Adrenal gland (tissue), 19 donors: ENCODE measurements at regions of chr19 and their contacts with region 1.

Region 1: DNA sequence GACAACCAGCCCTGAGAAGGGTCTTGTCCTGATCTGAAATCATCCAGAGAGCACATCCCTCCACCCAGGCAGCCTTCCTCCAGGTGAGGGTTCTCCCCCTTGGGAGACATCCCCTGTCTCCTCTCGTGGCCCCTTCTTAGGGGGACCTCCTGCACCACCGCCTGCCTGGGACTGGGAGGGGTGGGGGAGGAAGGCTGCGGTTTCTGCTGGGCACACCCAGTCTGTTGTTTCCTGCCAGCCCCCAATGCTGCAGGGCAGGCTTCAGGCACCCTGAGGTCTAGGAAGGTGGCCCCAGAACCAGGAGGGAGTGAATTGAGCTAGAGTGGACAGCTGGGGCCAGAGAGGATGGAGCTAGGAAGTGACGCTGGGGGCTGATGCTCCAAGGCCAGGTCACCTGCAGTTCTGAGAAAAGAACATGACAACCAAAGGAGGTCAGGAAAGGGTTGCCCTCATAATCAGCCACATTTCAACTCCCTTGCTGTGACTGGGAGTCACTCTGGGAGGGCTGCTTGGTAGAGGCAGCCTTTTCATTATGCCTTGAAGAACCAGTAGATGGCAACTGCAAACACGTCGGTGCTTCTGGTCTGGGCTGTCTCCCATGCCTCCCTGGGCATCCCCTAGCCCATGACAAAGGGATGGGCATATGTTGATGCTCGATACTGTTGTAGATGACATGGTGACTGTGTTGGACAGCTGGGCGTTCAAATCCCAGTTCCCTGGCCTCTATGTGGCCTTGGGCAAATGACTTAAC is 1.4 kb downstream of the ARHGEF18 start:
- DNase-seq: peak in 1 of 7 donors; percentile 10
- H3K4me3 ChIP-seq: no peak overlapping the region
- H3K27ac ChIP-seq: no peak overlapping the region
- H3K4me1 ChIP-seq: peaks cover 0 to 2% of the 10 kb centered on the region in 2 donors
- H3K27me3 ChIP-seq: no peaks in the 10 kb centered on the region
- CTCF ChIP-seq: no peak
- POLR2A ChIP-seq: no peak

Region 2: GRCh38 chr19:7312816-7313215 is 37.3 kb before region 1 on chr19:
- intact Hi-C with region 1: no loop called
- DNase-seq: peak in 2 of 7 donors; percentile 28 to 53
- H3K4me3 ChIP-seq: no peak overlapping the region
- H3K27ac ChIP-seq: no peak overlapping the region
- H3K4me1 ChIP-seq: no peaks in the 10 kb centered on the region
- H3K27me3 ChIP-seq: no peaks in the 10 kb centered on the region
- CTCF ChIP-seq: no peak
- POLR2A ChIP-seq: no peak

Region 3: GRCh38 chr19:7415163-7415858 is 65.2 kb after region 1 on chr19:
- intact Hi-C with region 1: no loop called
- DNase-seq: no peak
- H3K4me3 ChIP-seq: no peak overlapping the region
- H3K27ac ChIP-seq: no peak overlapping the region
- H3K4me1 ChIP-seq: no peaks in the 10 kb centered on the region
- H3K27me3 ChIP-seq: no peaks in the 10 kb centered on the region
- CTCF ChIP-seq: no peak
- POLR2A ChIP-seq: no peak

Region 4: DNA sequence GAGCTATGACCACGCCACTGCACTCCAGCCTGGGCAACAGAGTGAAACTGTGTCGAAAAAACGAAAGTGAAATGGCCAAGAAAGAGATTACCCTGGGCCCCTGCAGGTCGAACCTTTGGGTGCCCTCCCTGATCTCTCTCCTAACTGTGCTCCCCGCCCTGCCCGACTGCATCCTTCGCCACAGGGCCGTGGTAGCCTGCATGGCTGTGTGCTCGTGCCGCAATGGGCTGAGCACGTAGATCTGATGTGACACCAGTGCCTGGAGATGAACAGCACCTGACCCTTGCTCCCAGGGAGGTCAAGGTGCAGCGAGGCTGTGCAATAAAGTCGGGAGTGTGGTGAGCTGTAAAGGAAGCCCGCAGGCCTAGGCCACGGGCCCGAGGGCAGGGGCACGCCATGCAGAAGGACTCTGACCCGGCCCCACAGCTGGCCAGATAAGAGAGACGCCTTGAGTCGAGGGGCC is 78.5 kb after region 1 on chr19:
- intact Hi-C with region 1: no loop called
- DNase-seq: no peak
- H3K4me3 ChIP-seq: no peak overlapping the region
- H3K27ac ChIP-seq: no peak overlapping the region
- H3K4me1 ChIP-seq: no peaks in the 10 kb centered on the region
- H3K27me3 ChIP-seq: no peaks in the 10 kb centered on the region
- CTCF ChIP-seq: no peak
- POLR2A ChIP-seq: no peak

Region 5: GRCh38 chr19:7522072-7522922 is 172.2 kb after region 1 on chr19 and contains the start of gene MCOLN1:
- intact Hi-C with region 1: no loop called
- DNase-seq: peak; percentile 99 to 100 (median 100)
- H3K4me3 ChIP-seq: peak within 1 kb of the TSS; percentile 4 to 79 (median 34)
- H3K27ac ChIP-seq: peak within 1 kb of the TSS in 4 of 5 donors; percentile 9 to 85 (median 72)
- H3K4me1 ChIP-seq: peaks cover 21 to 50% of the 10 kb centered on the region in 2 donors
- H3K27me3 ChIP-seq: no peaks in the 10 kb centered on the region
- CTCF ChIP-seq: peak in 1 of 6 experiments; percentile 23
- POLR2A ChIP-seq: peak in 1 of 2 donors; percentile 89
- total RNA-seq, gene MCOLN1: 6.0 to 100.0 (median 49.4) TPM

Region 6: GRCh38 chr19:7535035-7535992 is 185.2 kb after region 1 on chr19 and contains the start of gene PNPLA6:
- intact Hi-C with region 1: loop called in 1 of 2 experiments (anchors 10 kb)
- DNase-seq: peak; percentile 94 to 98 (median 97)
- H3K4me3 ChIP-seq: peak within 1 kb of the TSS; percentile 27 to 98 (median 73)
- H3K27ac ChIP-seq: peak within 1 kb of the TSS; percentile 85 to 96 (median 88)
- H3K4me1 ChIP-seq: peaks cover 10% of the 10 kb centered on the region in 2 donors
- H3K27me3 ChIP-seq: no peaks in the 10 kb centered on the region
- CTCF ChIP-seq: peak in 1 of 6 experiments; percentile 0
- POLR2A ChIP-seq: peak; percentile 66 to 89
- total RNA-seq, gene PNPLA6: 23.7 to 257 (median 113) TPM

Region 7: DNA sequence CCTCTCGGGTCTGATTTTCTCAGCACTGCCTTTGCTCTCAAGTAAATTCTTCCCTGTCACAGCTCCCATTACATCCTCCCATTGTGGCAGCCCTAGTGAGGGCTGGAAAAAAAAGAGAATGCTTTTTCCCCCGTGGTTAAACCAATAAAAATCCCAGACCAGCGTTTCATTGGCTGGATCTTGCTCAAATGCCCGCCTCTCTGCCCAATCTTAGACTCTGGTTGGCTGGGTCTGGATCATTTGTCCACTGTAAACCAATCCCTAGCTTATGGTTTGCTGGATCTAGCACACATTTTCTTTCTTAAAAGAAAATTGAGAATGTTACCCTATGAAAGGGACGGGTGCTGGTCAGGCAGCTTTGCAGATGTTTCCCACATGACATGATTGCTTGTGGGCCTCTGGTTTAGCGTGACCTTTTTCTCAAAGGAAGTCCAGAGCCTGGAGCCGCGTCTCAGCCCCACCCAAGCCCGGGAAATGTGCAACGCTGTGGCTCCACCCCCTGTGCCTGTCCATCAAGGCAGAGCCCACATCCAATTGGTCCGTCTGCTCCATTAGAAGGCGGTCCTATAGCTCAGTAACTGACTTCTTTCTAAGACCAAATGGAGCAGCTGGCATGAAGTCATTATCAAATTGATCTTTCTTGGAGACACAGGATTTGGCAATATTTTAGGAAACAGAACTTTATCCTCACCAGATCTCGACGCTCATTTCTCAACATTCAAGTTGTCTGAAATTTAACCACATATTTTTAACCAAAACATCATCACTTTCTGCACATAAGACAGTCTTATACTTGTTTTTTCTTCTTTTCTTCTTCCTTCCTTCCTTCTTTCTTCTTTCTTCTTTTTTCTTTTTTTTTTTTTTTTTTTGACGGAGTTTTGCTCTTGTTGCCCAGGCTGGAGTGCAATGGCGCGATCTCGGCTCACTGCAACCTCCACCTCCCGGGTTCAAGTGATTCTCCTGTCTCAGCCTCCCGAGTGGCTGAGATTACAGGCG is 324.2 kb after region 1 on chr19:
- intact Hi-C with region 1: loop called in 1 of 2 experiments (anchors 10 kb)
- DNase-seq: peak; percentile 43 to 72 (median 65)
- H3K4me3 ChIP-seq: no peak overlapping the region
- H3K27ac ChIP-seq: no peak overlapping the region
- H3K4me1 ChIP-seq: no peaks in the 10 kb centered on the region
- H3K27me3 ChIP-seq: peaks cover 4% of the 10 kb centered on the region
- CTCF ChIP-seq: no peak
- POLR2A ChIP-seq: no peak

Region 8: GRCh38 chr19:7680606-7681339 is 330.6 kb after region 1 on chr19 and contains the start of gene TRAPPC5:
- intact Hi-C with region 1: loop called (anchors 10 kb)
- DNase-seq: peak; percentile 79 to 90 (median 82)
- H3K4me3 ChIP-seq: peak within 1 kb of the TSS; percentile 85 to 98 (median 90)
- H3K27ac ChIP-seq: peak within 1 kb of the TSS in 4 of 5 donors; percentile 59 to 90 (median 78)
- H3K4me1 ChIP-seq: peaks cover 3 to 13% of the 10 kb centered on the region in 2 donors
- H3K27me3 ChIP-seq: no peaks in the 10 kb centered on the region
- CTCF ChIP-seq: peak; percentile 8 to 99 (median 73)
- POLR2A ChIP-seq: peak; percentile 13 to 27
- total RNA-seq, gene TRAPPC5: 85.3 to 227 (median 145) TPM